WTC11 (cell line): ENCODE measurements at regions of chr2 and their contacts with region 1.

Region 1: DNA sequence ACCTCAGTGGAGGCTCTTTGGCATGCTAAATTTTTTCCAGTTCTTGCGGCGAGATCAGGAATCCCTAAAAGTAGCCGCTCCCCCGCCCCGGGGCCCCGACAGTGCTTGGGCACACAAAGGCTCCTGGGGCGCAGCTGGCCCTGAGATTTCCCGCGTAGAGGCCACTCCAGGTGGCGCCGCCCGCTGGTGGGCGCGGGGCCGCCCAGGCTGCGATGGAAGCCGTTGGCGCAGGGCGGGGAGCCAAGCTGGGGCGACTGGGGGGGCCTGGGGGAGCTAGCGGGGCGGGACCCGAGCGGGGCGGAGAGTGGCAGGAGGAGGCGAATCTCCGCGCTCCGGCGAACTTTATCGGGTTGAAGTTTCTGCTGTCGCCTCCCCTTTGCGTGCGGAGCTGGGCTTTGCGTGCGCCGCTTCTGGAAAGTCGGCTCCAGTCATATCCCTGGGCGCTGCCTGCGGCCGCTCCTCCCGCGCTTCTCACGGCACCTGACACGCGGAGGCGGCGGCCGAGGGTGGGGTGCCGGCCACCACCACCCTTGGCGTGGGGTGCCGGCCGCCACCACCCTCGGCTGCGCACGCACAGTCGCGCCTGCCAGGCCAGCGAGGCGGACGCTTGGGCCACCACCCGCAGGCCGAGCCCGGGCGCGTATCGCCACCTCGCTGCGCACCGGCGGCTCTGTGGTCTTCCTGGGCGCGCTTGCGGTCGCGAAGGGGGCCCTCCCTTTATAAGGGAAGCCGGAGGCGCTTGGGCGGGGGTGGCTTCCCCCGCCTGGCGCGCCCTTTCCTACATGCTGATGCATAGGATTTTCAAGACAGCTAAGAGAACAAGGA is 867 bp upstream of the CYP1B1 start:
- DNase-seq: peak; percentile 75
- ATAC-seq: peak; percentile 13
- H3K4me3 Mint-ChIP-seq: peak overlapping the region; percentile 73
- H3K27ac Mint-ChIP-seq: no peak overlapping the region
- H3K4me1 Mint-ChIP-seq: peaks cover 73% of the 10 kb centered on the region
- H3K27me3 Mint-ChIP-seq: peaks cover 69% of the 10 kb centered on the region
- CTCF ChIP-seq: no peak

Region 2: DNA sequence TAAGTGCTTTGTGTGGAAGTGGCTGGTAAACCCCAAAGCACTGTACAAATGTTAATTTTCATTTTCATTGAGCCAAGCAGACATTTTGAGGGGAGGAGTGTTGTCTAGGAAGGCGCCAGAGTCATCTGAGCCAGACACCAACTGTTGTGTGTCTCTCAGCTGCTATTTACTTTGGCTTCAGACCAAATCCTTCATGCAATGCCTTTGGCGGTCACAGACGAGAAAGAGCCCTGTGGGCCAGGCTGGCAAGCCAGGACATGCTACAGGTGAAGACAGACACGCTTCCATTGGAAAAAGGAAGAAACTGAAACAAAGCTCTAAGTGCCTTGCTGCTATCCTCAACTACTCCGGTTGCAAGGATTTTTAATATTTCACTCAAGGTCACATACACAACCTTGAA is 290.0 kb before region 1 on chr2:
- CTCF ChIA-PET with region 1: no interaction called
- POLR2A ChIA-PET with region 1: no interaction called
- DNase-seq: no peak
- ATAC-seq: no peak
- H3K4me3 Mint-ChIP-seq: no peak overlapping the region
- H3K27ac Mint-ChIP-seq: no peak overlapping the region
- H3K4me1 Mint-ChIP-seq: no peaks in the 10 kb centered on the region
- H3K27me3 Mint-ChIP-seq: no peaks in the 10 kb centered on the region
- CTCF ChIP-seq: no peak

Region 3: DNA sequence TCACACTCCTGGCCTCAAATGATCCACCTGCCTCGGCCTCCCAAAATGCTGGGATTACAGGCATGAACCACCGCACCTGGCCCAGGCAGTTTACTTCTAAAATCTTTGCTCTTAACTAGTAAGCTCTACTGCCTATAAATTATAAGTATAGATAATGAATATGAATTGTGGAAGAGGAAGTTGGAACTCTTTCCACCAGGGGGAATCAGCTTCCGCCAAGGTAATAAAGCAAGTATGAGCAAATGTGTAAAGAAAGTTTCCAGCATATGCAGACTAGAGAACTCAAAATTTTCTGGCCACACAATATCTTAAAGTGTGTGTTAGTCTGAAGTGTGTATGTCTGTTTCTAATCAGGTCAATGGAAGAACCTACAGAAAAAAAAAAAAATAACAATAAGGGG is 83.7 kb before region 1 on chr2:
- CTCF ChIA-PET with region 1: interaction called, 12 read pairs
- POLR2A ChIA-PET with region 1: interaction called, 3 read pairs
- DNase-seq: no peak
- ATAC-seq: no peak
- H3K4me3 Mint-ChIP-seq: no peak overlapping the region
- H3K27ac Mint-ChIP-seq: no peak overlapping the region; the same call in 1 of the 2 replicates
- H3K4me1 Mint-ChIP-seq: peaks cover 16% of the 10 kb centered on the region
- H3K27me3 Mint-ChIP-seq: no peaks in the 10 kb centered on the region
- CTCF ChIP-seq: no peak

Region 4: DNA sequence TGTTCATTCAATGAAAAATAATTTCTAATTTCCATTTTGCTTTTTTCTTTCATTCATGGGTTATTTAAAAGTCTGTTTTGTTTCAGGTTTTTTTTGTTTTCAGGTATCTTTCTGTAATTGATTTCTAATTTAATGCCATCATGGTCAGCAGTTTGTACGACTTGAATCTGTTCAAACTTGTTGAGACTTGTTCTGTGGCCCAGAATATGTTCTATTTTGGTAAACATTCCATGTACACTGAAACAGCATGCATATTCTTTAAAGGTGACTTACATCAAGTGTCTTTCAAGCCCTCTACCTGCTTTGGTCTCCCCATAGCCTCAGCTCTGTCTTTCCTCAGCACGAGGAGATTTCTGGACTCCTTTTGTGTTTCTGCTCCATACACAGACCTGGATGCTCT is 50.0 kb before region 1 on chr2:
- CTCF ChIA-PET with region 1: no interaction called
- POLR2A ChIA-PET with region 1: no interaction called
- DNase-seq: no peak
- ATAC-seq: no peak
- H3K4me3 Mint-ChIP-seq: no peak overlapping the region
- H3K27ac Mint-ChIP-seq: no peak overlapping the region
- H3K4me1 Mint-ChIP-seq: peaks cover 10% of the 10 kb centered on the region
- H3K27me3 Mint-ChIP-seq: no peaks in the 10 kb centered on the region
- CTCF ChIP-seq: no peak

Region 5: DNA sequence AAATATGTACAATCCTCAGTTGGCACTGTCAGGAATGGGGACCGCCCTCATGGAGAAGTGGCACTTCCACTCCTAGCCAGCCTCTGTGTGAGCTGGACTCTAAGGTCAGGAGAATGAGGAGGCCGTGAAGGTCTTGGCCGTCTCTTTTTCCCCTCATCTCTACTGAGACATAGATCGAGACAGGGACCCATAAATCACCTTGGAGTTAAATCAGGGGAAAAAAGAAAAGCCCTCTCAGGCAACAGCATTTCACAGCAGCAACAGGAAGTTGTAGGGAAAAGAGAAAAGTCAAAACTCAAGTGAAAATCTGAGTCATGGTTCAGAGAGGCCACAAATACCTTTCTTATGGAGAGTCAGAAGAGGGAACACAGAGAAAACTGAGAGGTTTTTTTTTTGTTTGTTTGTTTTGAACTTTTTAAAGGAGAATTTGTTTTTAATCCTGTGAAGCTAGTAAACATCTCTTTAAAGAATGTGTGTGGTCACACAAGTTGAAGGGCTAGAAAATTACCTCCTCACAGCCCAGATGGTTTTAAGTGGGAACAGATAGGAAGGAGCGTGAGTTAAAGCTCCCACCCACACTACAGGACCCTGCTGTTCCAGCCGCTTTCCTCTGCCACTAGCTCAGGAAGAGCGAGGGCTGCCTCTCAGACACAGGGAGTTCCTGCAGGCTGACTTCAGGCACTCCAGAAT is 29.7 kb after region 1 on chr2:
- CTCF ChIA-PET with region 1: interaction called, 39 read pairs
- POLR2A ChIA-PET with region 1: interaction called, 5 read pairs
- DNase-seq: no peak
- ATAC-seq: peak; percentile 63
- H3K4me3 Mint-ChIP-seq: no peak overlapping the region
- H3K27ac Mint-ChIP-seq: peak overlapping the region; percentile 91
- H3K4me1 Mint-ChIP-seq: peaks cover 39% of the 10 kb centered on the region
- H3K27me3 Mint-ChIP-seq: peaks cover 15% of the 10 kb centered on the region
- CTCF ChIP-seq: no peak

Region 6: GRCh38 chr2:38122344-38122743 is 45.5 kb after region 1 on chr2:
- CTCF ChIA-PET with region 1: interaction called, 16 read pairs
- POLR2A ChIA-PET with region 1: no interaction called
- DNase-seq: no peak
- ATAC-seq: no peak
- H3K4me3 Mint-ChIP-seq: no peak overlapping the region
- H3K27ac Mint-ChIP-seq: no peak overlapping the region
- H3K4me1 Mint-ChIP-seq: 0 out of 2 replicates have a peak, but pooled peaks cover 3% of the 10 kb centered on the region
- H3K27me3 Mint-ChIP-seq: no peaks in the 10 kb centered on the region; the same call in none of the 2 replicates
- CTCF ChIP-seq: no peak

Region 7: GRCh38 chr2:38377050-38377828 is 300.4 kb after region 1 on chr2 and contains the start of gene ATL2:
- CTCF ChIA-PET with region 1: interaction called, 10 read pairs
- POLR2A ChIA-PET with region 1: no interaction called
- DNase-seq: peak; percentile 97
- ATAC-seq: peak; percentile 90
- H3K4me3 Mint-ChIP-seq: peak within 1 kb of the TSS; percentile 94
- H3K27ac Mint-ChIP-seq: peak within 1 kb of the TSS; percentile 100
- H3K4me1 Mint-ChIP-seq: peaks cover 44% of the 10 kb centered on the region
- H3K27me3 Mint-ChIP-seq: no peaks in the 10 kb centered on the region
- CTCF ChIP-seq: no peak
- total RNA-seq, gene ATL2: 81.3 to 90.5 TPM (median 88.7 TPM) in 3 replicates